CD8-positive, alpha-beta memory T cell (primary cell): ENCODE measurements at regions of chr16 and their contacts with region 1.

Region 1: GRCh38 chr16:67561824-67562525 is 351 bp upstream of the CTCF start:
- DNase-seq: peak; percentile 95 to 98 (median 96)
- H3K4me3 ChIP-seq: peak overlapping the region; percentile 67
- H3K4me3 Mint-ChIP-seq: peak overlapping the region; percentile 87 to 98 (median 91)
- H3K27ac ChIP-seq: peak overlapping the region; percentile 78
- H3K27ac Mint-ChIP-seq: peak overlapping the region; percentile 85 to 96 (median 93)
- H3K4me1 ChIP-seq: peaks cover 32% of the 10 kb centered on the region
- H3K4me1 Mint-ChIP-seq: peaks cover 35 to 60% (median 48%) of the 10 kb centered on the region in 3 donors
- H3K27me3 ChIP-seq: no peaks in the 10 kb centered on the region
- H3K27me3 Mint-ChIP-seq: no peaks in the 10 kb centered on the region

Region 2: DNA sequence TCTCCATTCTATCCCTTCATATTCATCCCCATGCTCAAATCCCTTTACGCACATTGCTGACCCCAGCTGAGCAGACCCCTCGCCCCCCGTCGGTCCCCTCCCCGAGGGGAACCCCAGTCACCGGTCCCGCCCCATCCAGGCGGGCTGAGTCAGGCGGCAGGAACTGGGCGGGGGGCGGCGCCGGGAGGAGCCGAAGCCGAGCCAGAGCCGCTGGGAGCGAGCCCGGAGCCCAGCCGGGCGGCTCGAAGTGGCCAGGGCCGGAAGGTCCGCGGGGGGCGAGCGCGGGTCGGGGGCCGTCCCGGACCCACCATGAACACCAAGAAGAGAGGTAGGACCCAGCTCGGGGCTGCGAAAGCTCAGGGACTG is 24.7 kb before region 1 on chr16:
- CTCF ChIA-PET with region 1: interaction called, 3 read pairs
- POLR2A ChIA-PET with region 1: interaction called, 15 read pairs
- DNase-seq: peak in 4 of 5 donors; percentile 37 to 71 (median 49)
- H3K4me3 ChIP-seq: peak overlapping the region; percentile 60
- H3K4me3 Mint-ChIP-seq: peak overlapping the region; percentile 85 to 93 (median 86)
- H3K27ac ChIP-seq: peak overlapping the region; percentile 47
- H3K27ac Mint-ChIP-seq: peak overlapping the region; percentile 74 to 92 (median 91)
- H3K4me1 ChIP-seq: peaks cover 24% of the 10 kb centered on the region
- H3K4me1 Mint-ChIP-seq: peaks cover 22 to 44% (median 27%) of the 10 kb centered on the region in 3 donors
- H3K27me3 ChIP-seq: no peaks in the 10 kb centered on the region
- H3K27me3 Mint-ChIP-seq: peaks cover 0 to 6% of the 10 kb centered on the region in 2 donors

Region 3: GRCh38 chr16:67660564-67661028 is 98.6 kb after region 1 on chr16 and contains the start of gene PARD6A:
- CTCF ChIA-PET with region 1: interaction called, 6 read pairs
- POLR2A ChIA-PET with region 1: interaction called, 16 read pairs
- DNase-seq: peak; percentile 94 to 98 (median 95)
- H3K4me3 ChIP-seq: peak within 1 kb of the TSS; percentile 93
- H3K4me3 Mint-ChIP-seq: peak within 1 kb of the TSS; percentile 93 to 99 (median 94)
- H3K27ac ChIP-seq: peak within 1 kb of the TSS; percentile 98
- H3K27ac Mint-ChIP-seq: peak within 1 kb of the TSS; percentile 94 to 99 (median 96)
- H3K4me1 ChIP-seq: peaks cover 25% of the 10 kb centered on the region
- H3K4me1 Mint-ChIP-seq: peaks cover 14 to 37% (median 17%) of the 10 kb centered on the region in 3 donors
- H3K27me3 ChIP-seq: no peaks in the 10 kb centered on the region
- H3K27me3 Mint-ChIP-seq: peaks cover 0 to 3% of the 10 kb centered on the region in 2 donors
- total RNA-seq, gene PARD6A: 16.7 to 18.3 TPM

Region 4: DNA sequence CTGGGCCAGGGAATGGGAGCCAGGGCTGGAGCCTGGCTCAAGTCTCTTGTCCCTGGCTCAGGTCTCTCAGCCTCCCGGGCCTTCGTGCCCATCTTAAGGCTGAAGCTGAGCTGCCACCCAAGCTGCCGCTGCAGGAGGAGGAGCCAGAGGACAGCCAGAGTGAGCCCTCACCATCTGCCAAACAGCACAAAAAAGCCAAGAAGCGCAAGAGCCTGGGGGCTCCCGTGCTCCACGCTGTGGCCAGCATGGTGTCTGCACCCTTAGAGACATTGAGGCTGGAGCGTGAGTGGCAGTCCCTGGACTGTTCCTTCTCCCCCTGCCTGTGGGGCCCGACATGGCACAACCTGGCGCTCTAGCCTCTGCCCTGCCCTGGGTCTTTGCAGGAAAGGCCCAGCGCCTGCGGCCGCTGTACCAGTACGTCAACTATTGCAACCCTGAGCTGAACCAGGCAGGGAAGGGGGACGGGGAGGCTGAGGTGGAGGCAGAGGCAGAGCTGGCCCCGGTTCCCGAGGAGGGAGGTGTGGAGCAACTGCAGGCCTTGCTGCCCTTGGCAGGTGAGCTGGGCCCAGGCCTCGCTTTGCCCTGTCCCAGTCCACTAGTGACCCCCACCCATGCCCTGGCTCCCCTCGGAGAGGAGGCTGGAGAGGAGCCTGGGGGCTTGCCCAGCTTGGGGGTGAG is 106.0 kb after region 1 on chr16:
- CTCF ChIA-PET with region 1: interaction called, 22 read pairs
- POLR2A ChIA-PET with region 1: interaction called, 9 read pairs
- DNase-seq: peak; percentile 48 to 86 (median 74)
- H3K4me3 ChIP-seq: no peak overlapping the region
- H3K4me3 Mint-ChIP-seq: peak overlapping the region; percentile 19 to 94 (median 71)
- H3K27ac ChIP-seq: no peak overlapping the region
- H3K27ac Mint-ChIP-seq: peak overlapping the region in 5 of 8 donors; percentile 6 to 80 (median 42)
- H3K4me1 ChIP-seq: peaks cover 17% of the 10 kb centered on the region
- H3K4me1 Mint-ChIP-seq: peaks cover 7 to 27% (median 12%) of the 10 kb centered on the region in 3 donors
- H3K27me3 ChIP-seq: no peaks in the 10 kb centered on the region
- H3K27me3 Mint-ChIP-seq: no peaks in the 10 kb centered on the region

Region 5: DNA sequence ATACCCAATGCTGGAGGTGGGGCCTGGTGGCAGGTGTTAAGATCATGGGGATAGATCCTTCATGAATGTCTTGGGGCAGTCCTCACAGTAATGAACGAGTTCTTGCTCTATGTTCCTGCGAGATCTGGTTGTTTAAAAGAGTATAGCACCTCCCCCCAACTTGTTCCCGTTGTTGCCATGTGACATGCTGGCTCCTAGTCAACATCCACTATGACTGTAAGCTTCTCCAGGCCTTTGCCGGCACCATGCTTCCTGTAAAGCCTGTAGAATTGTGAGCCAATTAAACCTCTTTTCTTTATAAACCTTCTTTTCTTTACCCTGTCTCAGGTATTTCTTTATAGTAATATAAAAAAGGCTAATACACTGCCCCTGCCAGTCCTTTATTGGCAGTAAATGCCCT is 211.1 kb after region 1 on chr16:
- CTCF ChIA-PET with region 1: no interaction called
- POLR2A ChIA-PET with region 1: no interaction called
- DNase-seq: no peak
- H3K4me3 ChIP-seq: no peak overlapping the region
- H3K4me3 Mint-ChIP-seq: no peak overlapping the region
- H3K27ac ChIP-seq: no peak overlapping the region
- H3K27ac Mint-ChIP-seq: peak overlapping the region in 3 of 8 donors; percentile 18 to 63 (median 61)
- H3K4me1 ChIP-seq: no peaks in the 10 kb centered on the region
- H3K4me1 Mint-ChIP-seq: peaks cover 14 to 21% (median 17%) of the 10 kb centered on the region in 3 donors
- H3K27me3 ChIP-seq: no peaks in the 10 kb centered on the region
- H3K27me3 Mint-ChIP-seq: no peaks in the 10 kb centered on the region